A549 (cell line): ENCODE measurements at regions of chr2 and their contacts with region 1.

Region 1: GRCh38 chr2:31333527-31334183 is 80.9 kb downstream of the XDH start:
- DNase-seq: peak; percentile 74 to 80
- ATAC-seq: peak; percentile 85 to 92
- H3K4me3 ChIP-seq: no peak overlapping the region
- H3K27ac ChIP-seq: peak overlapping the region in 1 of 2 experiments; percentile 5; a peak in 1 of 6 replicates
- H3K4me1 ChIP-seq: no peaks in the 10 kb centered on the region
- CTCF ChIP-seq: peak; percentile 97
- EP300 ChIP-seq: no peak
- POLR2A ChIP-seq: no peak
- RAD21 ChIP-seq: peak; percentile 97 to 98

Region 2: GRCh38 chr2:29916571-29916970 is 1417.1 kb before region 1 on chr2:
- CTCF ChIA-PET with region 1: no interaction called
- POLR2A ChIA-PET with region 1: no interaction called
- DNase-seq: no peak
- ATAC-seq: no peak
- H3K4me3 ChIP-seq: no peak overlapping the region
- H3K27ac ChIP-seq: no peak overlapping the region
- H3K4me1 ChIP-seq: peaks cover 13% of the 10 kb centered on the region; the same call in 1 of the 3 replicates
- CTCF ChIP-seq: no peak
- EP300 ChIP-seq: no peak
- POLR2A ChIP-seq: no peak
- RAD21 ChIP-seq: no peak

Region 3: DNA sequence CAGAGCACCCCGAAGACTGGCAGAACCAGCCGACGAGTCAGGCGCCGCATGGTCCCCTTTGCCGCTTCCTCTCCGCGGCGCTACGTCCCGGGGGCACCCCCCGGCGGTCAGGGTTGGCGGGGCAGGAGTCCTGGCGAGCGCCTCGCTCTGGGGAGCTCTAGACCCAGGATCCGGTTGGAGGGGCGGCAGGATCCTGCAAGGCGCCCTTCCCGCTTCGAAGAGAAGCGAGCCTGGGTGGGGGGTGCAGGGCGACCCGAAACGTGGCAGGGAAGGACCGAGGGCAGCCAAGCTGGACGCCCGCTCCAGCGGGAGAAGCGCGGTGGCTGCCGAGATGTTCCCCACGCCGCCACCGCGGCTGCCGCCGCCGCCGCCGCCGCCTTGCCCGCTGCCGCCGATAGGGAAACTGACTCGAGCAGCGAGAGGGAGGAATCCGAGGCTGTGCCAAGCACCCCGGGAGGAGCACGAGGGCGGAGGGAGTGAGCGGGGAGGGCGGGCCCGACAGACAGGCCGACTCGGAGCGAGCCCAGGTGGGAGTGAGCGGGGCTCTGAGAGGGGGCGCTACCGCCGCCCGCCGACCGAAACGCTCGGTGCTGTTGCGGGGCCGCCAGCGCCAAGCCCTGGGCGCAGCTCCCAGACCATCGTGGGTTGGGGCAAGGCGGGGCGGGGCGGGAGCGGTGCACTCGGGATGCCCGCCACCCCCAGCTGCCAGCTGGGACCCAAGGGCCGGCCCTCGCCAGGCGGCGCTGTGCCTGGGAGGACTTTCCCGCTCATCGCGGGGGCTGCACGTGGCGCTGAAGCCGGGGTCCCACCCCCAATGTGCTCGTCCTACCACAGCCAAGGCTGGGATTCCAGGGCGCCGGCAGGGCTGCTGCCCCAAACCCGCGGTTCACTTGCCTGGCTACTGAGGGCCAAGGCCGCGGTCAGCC is 195.4 kb before region 1 on chr2 and contains the start of gene GALNT14:
- CTCF ChIA-PET with region 1: interaction called, 53 read pairs
- POLR2A ChIA-PET with region 1: interaction called, 3 read pairs
- DNase-seq: peak; percentile 85 to 96
- ATAC-seq: peak; percentile 89 to 92
- H3K4me3 ChIP-seq: peak within 1 kb of the TSS; percentile 63
- H3K27ac ChIP-seq: peak within 1 kb of the TSS; percentile 79 to 88
- H3K4me1 ChIP-seq: peaks cover 11% of the 10 kb centered on the region
- CTCF ChIP-seq: peak; percentile 88
- EP300 ChIP-seq: no peak
- POLR2A ChIP-seq: no peak; the same call in none of the 2 replicates
- RAD21 ChIP-seq: peak; percentile 63 to 65
- polyA plus RNA-seq, gene GALNT14: 34.4 and 40.1 TPM in 2 replicates

Region 4: GRCh38 chr2:31227711-31228125 is 105.9 kb before region 1 on chr2:
- CTCF ChIA-PET with region 1: interaction called, 16 read pairs
- POLR2A ChIA-PET with region 1: no interaction called
- DNase-seq: no peak
- ATAC-seq: peak in 1 of 2 experiments; percentile 29; a peak in 1 of 6 replicates
- H3K4me3 ChIP-seq: no peak overlapping the region
- H3K27ac ChIP-seq: no peak overlapping the region
- H3K4me1 ChIP-seq: no peaks in the 10 kb centered on the region
- CTCF ChIP-seq: no peak
- EP300 ChIP-seq: no peak
- POLR2A ChIP-seq: no peak
- RAD21 ChIP-seq: no peak

Region 5: DNA sequence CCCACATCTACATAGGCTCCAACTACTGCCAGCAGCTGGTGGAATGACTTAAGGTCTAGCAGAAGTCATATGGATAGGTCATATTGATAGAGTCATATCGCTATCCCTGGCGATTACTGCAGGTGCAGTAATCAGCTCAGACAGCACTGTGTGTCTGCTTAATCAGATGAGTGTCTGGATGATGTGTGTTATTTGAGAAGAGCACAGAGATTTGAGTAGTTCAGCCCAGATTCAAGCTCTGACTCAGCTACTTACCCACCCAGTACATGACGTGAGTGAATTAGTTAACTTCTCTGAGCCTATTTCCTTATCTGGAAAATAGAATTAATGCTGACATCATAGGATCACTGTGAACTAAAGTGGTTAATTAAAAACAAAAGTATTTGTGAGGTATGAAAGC is 20.8 kb before region 1 on chr2:
- CTCF ChIA-PET with region 1: interaction called, 24 read pairs
- POLR2A ChIA-PET with region 1: no interaction called
- DNase-seq: no peak
- ATAC-seq: no peak
- H3K4me3 ChIP-seq: no peak overlapping the region
- H3K27ac ChIP-seq: no peak overlapping the region
- H3K4me1 ChIP-seq: no peaks in the 10 kb centered on the region
- CTCF ChIP-seq: no peak
- EP300 ChIP-seq: no peak
- POLR2A ChIP-seq: no peak
- RAD21 ChIP-seq: no peak

Region 6: DNA sequence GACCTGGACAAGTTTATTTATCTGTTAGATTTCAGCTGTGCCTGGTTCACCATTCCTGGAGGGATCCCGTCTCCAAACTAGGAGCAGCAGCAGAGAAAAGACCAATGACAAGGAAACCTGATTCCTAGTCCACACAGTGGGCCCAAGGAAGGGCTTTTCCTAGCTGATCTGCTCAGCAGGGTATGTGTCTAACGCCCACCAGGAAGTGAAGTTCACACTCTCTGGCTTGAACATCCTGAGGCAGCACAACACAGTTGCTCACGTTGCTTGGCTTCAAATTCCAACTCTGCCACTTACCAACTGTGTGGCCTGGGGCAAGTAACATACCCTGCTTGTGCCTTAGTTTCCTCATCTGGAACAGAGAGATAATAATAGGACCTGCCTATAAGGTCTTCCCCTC is 38.0 kb after region 1 on chr2:
- CTCF ChIA-PET with region 1: interaction called, 16 read pairs
- POLR2A ChIA-PET with region 1: no interaction called
- DNase-seq: no peak
- ATAC-seq: no peak
- H3K4me3 ChIP-seq: no peak overlapping the region
- H3K27ac ChIP-seq: no peak overlapping the region
- H3K4me1 ChIP-seq: no peaks in the 10 kb centered on the region
- CTCF ChIP-seq: no peak
- EP300 ChIP-seq: no peak
- POLR2A ChIP-seq: no peak
- RAD21 ChIP-seq: no peak

Region 7: DNA sequence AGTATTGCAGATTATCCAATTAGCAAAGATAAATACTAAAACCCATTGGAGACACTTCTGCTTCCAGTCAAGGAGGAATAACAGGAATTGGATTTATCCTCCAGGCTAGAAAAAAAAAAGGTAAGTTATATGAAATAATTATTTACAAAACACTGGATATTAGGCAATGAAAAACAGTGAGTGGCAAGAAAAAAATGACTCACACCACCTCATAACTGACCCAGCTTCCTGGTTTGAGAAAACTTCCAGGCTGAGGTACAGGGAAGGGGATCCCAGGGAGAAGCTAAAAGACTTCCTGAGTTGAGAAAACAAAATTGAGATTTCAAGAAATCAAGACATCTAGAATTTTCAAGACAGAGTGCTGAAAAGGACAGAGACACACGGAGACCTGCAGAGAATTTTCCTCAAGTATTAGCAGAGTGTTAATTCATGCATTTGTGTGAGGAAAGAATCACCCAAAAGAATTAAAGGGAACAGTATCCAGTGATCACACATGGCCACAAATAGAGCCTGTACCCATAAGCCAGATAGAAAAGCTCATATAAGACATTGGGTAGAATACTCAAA is 229.7 kb after region 1 on chr2:
- CTCF ChIA-PET with region 1: no interaction called
- POLR2A ChIA-PET with region 1: no interaction called
- DNase-seq: peak in 1 of 2 experiments; percentile 59
- ATAC-seq: no peak; a peak in 1 of 6 replicates
- H3K4me3 ChIP-seq: no peak overlapping the region
- H3K27ac ChIP-seq: peak overlapping the region; percentile 17 to 35; a peak in 3 of 6 replicates
- H3K4me1 ChIP-seq: peaks cover 24% of the 10 kb centered on the region
- CTCF ChIP-seq: no peak
- EP300 ChIP-seq: no peak
- POLR2A ChIP-seq: no peak
- RAD21 ChIP-seq: no peak; a peak in 1 of 5 replicates